ENCODE measurements at regions of chr7 and their contacts with region 1.

Region 1: DNA sequence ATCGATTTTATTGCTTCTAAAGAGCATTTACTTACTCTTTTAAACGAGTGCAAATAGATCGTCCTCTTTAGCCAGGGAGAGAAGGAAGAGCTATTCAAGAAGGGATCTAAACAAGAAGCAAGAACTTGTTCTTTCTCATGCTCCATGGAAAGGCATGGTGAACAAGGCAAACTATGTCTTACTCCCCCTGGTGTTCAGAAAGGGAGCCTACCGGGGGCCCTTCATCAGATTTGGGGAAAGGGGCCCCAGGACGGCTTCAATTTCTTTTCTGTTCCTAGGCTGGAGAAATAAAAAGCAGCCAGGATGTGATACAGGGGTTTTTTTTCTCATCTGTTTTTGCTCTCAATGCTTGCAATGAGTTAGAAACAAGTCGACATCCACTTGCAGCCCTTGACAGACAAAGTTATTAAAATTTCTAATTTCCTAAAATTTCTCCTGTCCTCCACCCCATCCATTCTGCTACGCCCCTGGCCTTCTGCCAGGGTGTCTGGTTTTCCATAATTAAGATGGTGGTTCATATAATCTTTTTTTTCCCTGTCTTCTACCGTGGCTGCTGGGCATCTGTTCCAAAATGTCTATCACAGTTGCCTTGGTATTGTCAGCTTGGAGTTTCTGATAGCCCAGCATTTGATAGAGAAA is 214.4 kb downstream of the CREB5 start:
- DNase-seq: peak in 1 of 3 donors; percentile 72
- ATAC-seq: peak; percentile 45 to 54
- H3K4me3 ChIP-seq: no peak overlapping the region
- H3K27ac ChIP-seq: peak overlapping the region; percentile 38
- H3K4me1 ChIP-seq: peaks cover 6% of the 10 kb centered on the region
- H3K27me3 ChIP-seq: no peaks in the 10 kb centered on the region

Region 2: DNA sequence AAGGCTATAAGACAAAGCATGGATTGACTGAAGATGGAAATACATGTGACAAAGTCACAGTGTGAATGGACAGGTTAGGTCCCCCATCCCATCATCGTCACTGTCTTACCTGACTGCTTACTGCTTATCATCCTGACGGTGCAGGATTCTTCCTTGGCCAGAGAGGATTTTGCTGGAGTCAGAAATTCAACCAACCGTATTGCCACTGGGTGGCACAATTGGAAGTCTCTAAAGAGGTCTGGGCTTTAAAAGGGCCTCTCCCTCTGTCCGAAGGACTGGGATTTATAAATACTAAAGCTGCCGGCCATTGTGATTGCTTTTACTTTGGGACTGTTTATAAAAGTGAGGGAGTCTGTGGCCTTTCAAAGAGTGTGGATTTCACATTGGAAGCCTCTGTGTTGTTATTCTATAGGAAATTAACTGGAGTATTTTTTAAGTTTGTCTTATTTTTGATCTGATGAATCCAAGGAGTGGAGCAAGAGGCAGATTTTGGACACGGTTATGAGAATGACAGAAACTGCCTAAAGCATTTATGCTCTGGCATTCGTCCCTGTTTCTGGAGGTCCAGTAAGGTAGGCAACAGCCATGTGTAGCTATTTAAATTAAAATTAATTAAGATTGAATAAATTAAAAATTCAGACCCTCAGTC is 327.7 kb before region 1 on chr7:
- intact Hi-C with region 1: loop called in 1 of 4 experiments (anchors 5 kb)
- DNase-seq: no peak
- ATAC-seq: peak; percentile 36 to 69
- H3K4me3 ChIP-seq: no peak overlapping the region
- H3K27ac ChIP-seq: no peak overlapping the region
- H3K4me1 ChIP-seq: no peaks in the 10 kb centered on the region
- H3K27me3 ChIP-seq: no peaks in the 10 kb centered on the region

Region 3: DNA sequence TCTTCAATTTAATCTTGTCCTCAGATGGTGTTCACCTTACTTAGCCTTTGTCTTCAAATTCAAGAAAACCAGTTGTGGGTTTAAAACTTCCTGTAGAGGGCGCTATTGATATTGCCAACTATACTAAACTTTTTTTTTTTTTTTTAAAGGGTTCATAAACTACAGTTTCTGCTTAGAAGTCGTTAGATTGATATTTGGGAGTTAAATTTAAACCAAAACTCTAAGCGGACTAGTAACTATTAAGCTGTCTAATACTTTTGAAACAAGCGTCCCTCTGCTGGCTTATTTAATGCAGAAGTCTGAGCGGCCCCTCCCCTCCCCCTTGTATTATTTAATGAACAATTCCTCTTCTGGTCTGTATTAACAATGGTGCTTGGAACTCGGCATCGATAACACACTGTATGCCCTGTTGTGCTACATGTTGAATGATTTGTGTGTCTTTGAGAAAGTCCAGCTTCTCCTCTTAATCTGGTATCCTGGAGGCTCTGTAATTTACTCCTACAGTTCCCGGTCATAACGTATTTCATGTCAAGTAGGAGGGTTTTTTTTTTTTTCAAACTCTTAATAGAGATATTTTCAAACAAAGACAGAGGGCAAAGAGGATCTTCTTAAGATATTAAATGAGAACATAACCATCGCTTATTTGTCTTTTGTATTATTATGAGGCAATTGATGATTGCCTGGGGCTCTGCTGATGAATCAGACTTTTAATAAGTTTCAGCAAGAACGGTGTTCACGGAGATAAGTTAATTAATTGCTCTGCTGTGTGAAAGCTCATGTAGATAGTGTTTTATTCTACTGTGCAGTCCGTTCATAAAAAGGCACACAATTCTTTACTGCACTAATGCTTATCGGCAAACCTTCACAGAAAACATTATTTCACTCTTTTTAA is 237.0 kb before region 1 on chr7:
- intact Hi-C with region 1: loop called in 2 of 4 experiments (anchors 5 to 10 kb)
- DNase-seq: peak in 1 of 3 donors; percentile 62
- ATAC-seq: peak in 1 of 2 donors; percentile 51
- H3K4me3 ChIP-seq: peak overlapping the region; percentile 55
- H3K27ac ChIP-seq: no peak overlapping the region
- H3K4me1 ChIP-seq: no peaks in the 10 kb centered on the region
- H3K27me3 ChIP-seq: no peaks in the 10 kb centered on the region

Region 4: DNA sequence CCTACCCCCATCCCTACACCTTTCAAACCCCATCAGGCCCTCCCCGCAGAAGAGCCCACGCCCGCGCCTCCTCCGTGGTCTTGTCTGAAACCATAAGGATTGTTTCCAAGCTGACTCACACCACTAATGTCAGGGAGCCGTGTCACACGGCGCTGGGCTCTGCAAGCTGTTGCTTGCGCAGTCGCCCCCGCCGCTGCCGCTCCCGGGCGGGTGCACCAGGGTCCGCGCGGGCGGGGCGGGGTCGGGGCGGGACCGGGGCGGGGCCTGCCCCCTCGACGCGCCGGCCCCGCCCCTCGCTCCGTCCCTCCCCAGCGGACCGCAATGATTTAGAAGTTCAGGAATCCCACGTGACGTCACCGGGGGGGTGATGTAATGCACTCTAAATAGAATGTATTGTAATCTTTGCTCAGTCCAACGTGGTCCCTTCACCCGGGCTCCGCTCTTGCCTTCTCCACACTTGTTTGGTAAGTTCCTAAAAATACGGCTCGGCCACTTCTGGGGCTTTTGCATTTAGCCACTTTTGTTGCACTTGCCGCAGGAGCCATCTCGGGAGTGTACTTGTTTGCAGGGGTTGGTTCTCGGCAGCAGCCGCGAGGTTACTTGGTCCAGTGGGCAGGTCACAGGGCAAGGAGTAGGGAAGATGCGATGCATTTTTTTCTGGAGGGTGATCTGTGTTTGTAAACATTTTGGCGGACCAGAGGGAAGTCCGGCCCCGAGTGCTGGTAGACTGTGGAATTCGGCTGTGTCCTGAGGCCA is 217.6 kb before region 1 on chr7:
- intact Hi-C with region 1: loop called in 1 of 4 experiments (anchors 5 kb)
- DNase-seq: peak; percentile 96 to 97 (median 96)
- ATAC-seq: peak; percentile 91 to 92
- H3K4me3 ChIP-seq: peak overlapping the region; percentile 61
- H3K27ac ChIP-seq: peak overlapping the region; percentile 94
- H3K4me1 ChIP-seq: peaks cover 7% of the 10 kb centered on the region
- H3K27me3 ChIP-seq: no peaks in the 10 kb centered on the region

Region 5: GRCh38 chr7:28853834-28854749 is 227.3 kb after region 1 on chr7:
- intact Hi-C with region 1: loop called in 2 of 4 experiments (anchors 5 to 10 kb)
- DNase-seq: peak; percentile 80 to 93 (median 92)
- ATAC-seq: peak; percentile 98 to 99
- H3K4me3 ChIP-seq: peak overlapping the region; percentile 66
- H3K27ac ChIP-seq: no peak overlapping the region
- H3K4me1 ChIP-seq: no peaks in the 10 kb centered on the region
- H3K27me3 ChIP-seq: no peaks in the 10 kb centered on the region

Measured in right cardiac atrium (tissue), 5 donors.